PC-9 (cell line): ENCODE measurements at regions of chr18 and their contacts with region 1.

Region 1: GRCh38 chr18:3511922-3512372 is 62.0 kb downstream of the TGIF1 start:
- DNase-seq: peak; percentile 51 to 81
- H3K4me3 ChIP-seq: no peak overlapping the region
- H3K27ac ChIP-seq: 0 out of 2 replicates have a peak overlapping the region, but pooled peaks have one; percentile 6
- H3K4me1 ChIP-seq: peaks cover 16% of the 10 kb centered on the region
- H3K27me3 ChIP-seq: no peaks in the 10 kb centered on the region
- CTCF ChIP-seq: no peak

Region 2: GRCh38 chr18:3525870-3526420 is 14.0 kb after region 1 on chr18:
- CTCF ChIA-PET with region 1: interaction called, 21 read pairs
- POLR2A ChIA-PET with region 1: no interaction called
- intact Hi-C with region 1: no loop called
- DNase-seq: no peak
- H3K4me3 ChIP-seq: no peak overlapping the region
- H3K27ac ChIP-seq: no peak overlapping the region
- H3K4me1 ChIP-seq: no peaks in the 10 kb centered on the region
- H3K27me3 ChIP-seq: no peaks in the 10 kb centered on the region
- CTCF ChIP-seq: no peak

Region 3: GRCh38 chr18:3554091-3554601 is 42.2 kb after region 1 on chr18:
- CTCF ChIA-PET with region 1: no interaction called
- POLR2A ChIA-PET with region 1: no interaction called
- intact Hi-C with region 1: no loop called
- DNase-seq: no peak
- H3K4me3 ChIP-seq: no peak overlapping the region
- H3K27ac ChIP-seq: no peak overlapping the region
- H3K4me1 ChIP-seq: no peaks in the 10 kb centered on the region
- H3K27me3 ChIP-seq: no peaks in the 10 kb centered on the region
- CTCF ChIP-seq: no peak

Region 4: GRCh38 chr18:3689986-3690763 is 178.2 kb after region 1 on chr18:
- CTCF ChIA-PET with region 1: interaction called, 14 read pairs
- POLR2A ChIA-PET with region 1: no interaction called
- intact Hi-C with region 1: no loop called
- DNase-seq: no peak
- H3K4me3 ChIP-seq: no peak overlapping the region
- H3K27ac ChIP-seq: no peak overlapping the region
- H3K4me1 ChIP-seq: no peaks in the 10 kb centered on the region
- H3K27me3 ChIP-seq: no peaks in the 10 kb centered on the region
- CTCF ChIP-seq: no peak

Region 5: DNA sequence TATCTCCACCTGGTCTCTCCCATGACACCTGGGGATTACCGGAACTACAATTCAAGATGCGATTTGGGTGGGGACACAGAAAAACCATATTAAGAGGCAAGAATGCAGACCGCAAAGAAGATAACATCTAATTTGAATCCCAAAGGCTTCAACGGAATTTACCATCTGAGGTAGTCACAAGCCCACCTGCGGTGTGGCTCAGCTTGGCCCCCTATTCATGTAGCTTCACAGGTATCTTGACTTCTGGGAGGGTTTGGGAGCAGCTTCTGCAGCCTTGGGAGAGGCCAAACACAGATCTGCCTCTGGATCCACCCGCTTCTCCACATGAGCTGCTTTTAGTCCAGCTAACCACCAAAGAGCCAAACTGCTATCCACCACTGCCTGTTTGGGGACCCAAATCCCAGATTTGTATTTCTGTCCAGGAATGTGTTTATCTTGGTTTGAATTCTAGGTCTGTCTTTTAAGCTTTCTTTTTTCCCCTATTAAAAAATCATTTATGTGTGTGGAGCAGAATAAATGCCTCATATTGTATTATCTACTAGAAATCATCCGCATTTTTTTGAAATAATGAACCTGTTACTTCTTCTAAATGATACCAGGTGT is 695.5 kb after region 1 on chr18:
- CTCF ChIA-PET with region 1: no interaction called
- POLR2A ChIA-PET with region 1: no interaction called
- intact Hi-C with region 1: no loop called
- DNase-seq: no peak
- H3K4me3 ChIP-seq: no peak overlapping the region
- H3K27ac ChIP-seq: no peak overlapping the region
- H3K4me1 ChIP-seq: no peaks in the 10 kb centered on the region
- H3K27me3 ChIP-seq: 0 out of 2 replicates have a peak, but pooled peaks cover 4% of the 10 kb centered on the region
- CTCF ChIP-seq: no peak